CD14-positive monocyte (primary cell): ENCODE measurements at regions of chr6 and their contacts with region 1.

Region 1: DNA sequence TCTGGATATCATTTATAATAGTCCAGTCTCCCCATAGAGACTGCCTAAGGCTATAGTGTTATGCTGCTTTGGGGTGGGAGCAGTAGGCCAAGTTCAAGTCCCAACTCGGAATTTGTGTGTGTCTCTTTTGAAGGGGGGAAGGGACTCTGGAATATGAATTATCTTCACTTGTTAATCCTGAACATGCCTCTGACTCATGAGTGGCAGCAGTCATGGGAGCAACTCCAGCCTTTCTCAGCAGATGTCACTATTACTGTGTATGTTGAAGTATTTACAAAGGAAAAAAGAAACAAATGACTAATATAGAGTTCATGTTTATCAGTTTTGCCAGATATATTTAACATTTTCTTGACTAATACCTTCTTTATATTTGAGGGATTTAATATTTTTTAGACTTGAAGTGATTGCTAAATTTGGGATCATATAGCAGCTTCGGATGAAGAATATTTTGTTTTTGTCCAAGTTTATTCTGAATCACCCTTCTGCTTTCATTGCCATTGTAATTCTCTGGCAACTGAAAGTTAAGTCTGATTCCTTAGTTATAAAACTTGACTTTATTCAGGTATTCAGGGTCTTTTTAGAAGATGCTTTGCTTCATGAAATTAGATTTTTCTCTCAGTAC is 23.4 kb downstream of the FAM217A start:
- DNase-seq: peak in 1 of 3 donors; percentile 6
- H3K4me3 ChIP-seq: no peak overlapping the region
- H3K4me3 Mint-ChIP-seq: no peak overlapping the region
- H3K27ac ChIP-seq: no peak overlapping the region
- H3K27ac Mint-ChIP-seq: peak overlapping the region in 1 of 7 donors; percentile 52
- H3K4me1 ChIP-seq: no peaks in the 10 kb centered on the region
- H3K4me1 Mint-ChIP-seq: no peaks in the 10 kb centered on the region
- H3K27me3 ChIP-seq: no peaks in the 10 kb centered on the region
- H3K27me3 Mint-ChIP-seq: no peaks in the 10 kb centered on the region
- CTCF ChIP-seq: no peak

Region 2: GRCh38 chr6:4155848-4156466 is 100.4 kb after region 1 on chr6:
- intact Hi-C with region 1: loop called in 1 of 2 experiments (anchors 5 kb)
- DNase-seq: peak; percentile 63 to 79 (median 68)
- H3K4me3 ChIP-seq: no peak overlapping the region
- H3K4me3 Mint-ChIP-seq: no peak overlapping the region
- H3K27ac ChIP-seq: no peak overlapping the region
- H3K27ac Mint-ChIP-seq: no peak overlapping the region
- H3K4me1 ChIP-seq: no peaks in the 10 kb centered on the region
- H3K4me1 Mint-ChIP-seq: peaks cover 6% of the 10 kb centered on the region
- H3K27me3 ChIP-seq: no peaks in the 10 kb centered on the region
- H3K27me3 Mint-ChIP-seq: peaks cover 0 to under 1% (median 0%) of the 10 kb centered on the region in 3 donors
- CTCF ChIP-seq: peak; percentile 89

Region 3: GRCh38 chr6:4291453-4292403 is 236.2 kb after region 1 on chr6:
- intact Hi-C with region 1: no loop called
- DNase-seq: no peak
- H3K4me3 ChIP-seq: no peak overlapping the region
- H3K4me3 Mint-ChIP-seq: no peak overlapping the region
- H3K27ac ChIP-seq: no peak overlapping the region
- H3K27ac Mint-ChIP-seq: no peak overlapping the region
- H3K4me1 ChIP-seq: no peaks in the 10 kb centered on the region
- H3K4me1 Mint-ChIP-seq: no peaks in the 10 kb centered on the region
- H3K27me3 ChIP-seq: no peaks in the 10 kb centered on the region
- H3K27me3 Mint-ChIP-seq: peaks cover 0 to 4% (median 2%) of the 10 kb centered on the region in 3 donors
- CTCF ChIP-seq: no peak

Region 4: GRCh38 chr6:4313044-4313686 is 257.6 kb after region 1 on chr6:
- intact Hi-C with region 1: no loop called
- DNase-seq: no peak
- H3K4me3 ChIP-seq: no peak overlapping the region
- H3K4me3 Mint-ChIP-seq: no peak overlapping the region
- H3K27ac ChIP-seq: no peak overlapping the region
- H3K27ac Mint-ChIP-seq: no peak overlapping the region
- H3K4me1 ChIP-seq: peaks cover 14 to 17% of the 10 kb centered on the region in 2 donors
- H3K4me1 Mint-ChIP-seq: peaks cover 17% of the 10 kb centered on the region
- H3K27me3 ChIP-seq: no peaks in the 10 kb centered on the region
- H3K27me3 Mint-ChIP-seq: peaks cover 2 to 4% (median 3%) of the 10 kb centered on the region in 3 donors
- CTCF ChIP-seq: no peak